Breast epithelium (tissue), 4 donors: ENCODE measurements at regions of chr1 and their contacts with region 1.

Region 1: DNA sequence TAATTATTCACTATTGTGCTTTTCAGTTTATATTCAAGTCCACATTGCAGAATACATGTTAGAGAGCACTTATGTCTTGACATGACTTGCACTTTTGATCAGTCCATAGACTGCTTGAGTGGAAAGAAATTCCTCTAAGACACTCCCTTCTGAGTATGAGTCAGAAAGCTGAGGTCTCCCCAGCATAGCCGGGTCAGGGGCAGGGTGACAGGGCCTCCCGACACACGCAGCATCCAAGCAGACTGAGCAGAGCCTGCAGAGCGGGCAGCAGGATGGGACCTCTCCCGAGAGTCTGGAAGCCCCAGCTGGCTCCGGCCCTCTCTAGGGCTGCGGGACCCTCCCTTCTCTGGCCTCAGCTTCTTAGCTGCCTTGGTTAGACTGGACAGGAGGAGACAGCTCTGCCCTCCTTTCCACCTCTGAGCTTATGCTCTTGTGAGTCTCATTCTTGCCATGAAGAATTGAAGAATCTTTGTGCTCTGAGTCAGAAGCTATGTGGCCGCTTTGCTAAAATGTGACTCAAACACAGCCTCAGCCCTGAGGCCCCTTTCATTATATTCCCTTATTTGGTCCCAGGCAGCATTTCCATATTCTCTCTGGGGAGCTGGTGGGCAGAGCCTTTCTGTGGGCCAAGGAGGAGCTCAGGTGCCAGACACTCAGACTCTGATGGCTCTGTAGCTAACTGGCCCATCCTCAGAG is 11.2 kb upstream of the CAPN2 start:
- DNase-seq: peak in 1 of 2 donors; percentile 71
- H3K4me3 ChIP-seq: peak overlapping the region in 1 of 3 donors; percentile 30
- H3K27ac ChIP-seq: peak overlapping the region; percentile 83 to 91
- H3K4me1 ChIP-seq: no peaks in the 10 kb centered on the region
- H3K27me3 ChIP-seq: no peaks in the 10 kb centered on the region
- CTCF ChIP-seq: no peak
- POLR2A ChIP-seq: no peak

Region 2: GRCh38 chr1:223748773-223749733 is 48.0 kb after region 1 on chr1:
- intact Hi-C with region 1: loop called (anchors 5 kb)
- DNase-seq: peak; percentile 46 to 63
- H3K4me3 ChIP-seq: peak overlapping the region; percentile 37 to 60 (median 42)
- H3K27ac ChIP-seq: peak overlapping the region; percentile 68 to 69
- H3K4me1 ChIP-seq: no peaks in the 10 kb centered on the region
- H3K27me3 ChIP-seq: no peaks in the 10 kb centered on the region
- CTCF ChIP-seq: peak; percentile 79 to 90 (median 89)
- POLR2A ChIP-seq: no peak